CD8-positive, alpha-beta T cell (primary cell): ENCODE measurements at regions of chr6 and their contacts with region 1.

Region 1: GRCh38 chr6:159720708-159721107 is 6.6 kb upstream of the WTAP start:
- DNase-seq: peak in 5 of 9 experiments; percentile 33 to 84 (median 53)
- ATAC-seq: peak; percentile 74
- H3K4me3 ChIP-seq: no peak overlapping the region
- H3K4me3 Mint-ChIP-seq: no peak overlapping the region
- H3K27ac ChIP-seq: no peak overlapping the region
- H3K27ac Mint-ChIP-seq: no peak overlapping the region
- H3K4me1 ChIP-seq: peaks cover 6% of the 10 kb centered on the region
- H3K4me1 Mint-ChIP-seq: peaks cover 16% of the 10 kb centered on the region
- H3K27me3 ChIP-seq: no peaks in the 10 kb centered on the region
- H3K27me3 Mint-ChIP-seq: no peaks in the 10 kb centered on the region
- CTCF ChIP-seq: peak; percentile 65

Region 2: GRCh38 chr6:159852877-159853276 is 132.2 kb after region 1 on chr6:
- CTCF ChIA-PET with region 1: interaction called, 19 read pairs
- POLR2A ChIA-PET with region 1: interaction called, 13 read pairs
- intact Hi-C with region 1: loop called (anchors 1 kb)
- DNase-seq: peak in 3 of 9 experiments; percentile 29 to 56 (median 41)
- ATAC-seq: peak; percentile 58
- H3K4me3 ChIP-seq: no peak overlapping the region
- H3K4me3 Mint-ChIP-seq: no peak overlapping the region
- H3K27ac ChIP-seq: no peak overlapping the region
- H3K27ac Mint-ChIP-seq: no peak overlapping the region
- H3K4me1 ChIP-seq: no peaks in the 10 kb centered on the region
- H3K4me1 Mint-ChIP-seq: peaks cover 8% of the 10 kb centered on the region
- H3K27me3 ChIP-seq: no peaks in the 10 kb centered on the region
- H3K27me3 Mint-ChIP-seq: peaks cover 1% of the 10 kb centered on the region
- CTCF ChIP-seq: peak; percentile 51